ENCODE measurements at regions of chr14 and their contacts with region 1.

Region 1: DNA sequence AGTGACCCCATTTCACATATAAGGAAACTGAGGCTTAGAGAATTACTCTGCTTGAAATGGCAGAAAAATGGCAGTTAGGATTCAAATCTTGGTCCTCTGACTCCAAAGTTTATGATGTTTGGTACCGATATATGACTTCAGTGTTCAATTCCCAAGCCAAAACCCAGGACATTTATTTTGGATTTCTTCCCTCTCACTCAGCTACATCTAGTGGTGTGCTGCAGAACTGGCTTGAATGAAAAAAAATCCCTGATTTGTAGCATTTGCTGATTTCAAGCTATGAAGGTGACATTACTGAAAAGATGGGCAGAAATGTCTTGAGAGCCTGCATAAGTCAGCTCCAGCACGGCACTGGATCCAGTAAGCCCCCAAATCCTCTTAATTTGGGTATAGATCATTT is 106.4 kb downstream of the EFCAB11 start:
- DNase-seq: no peak
- H3K4me3 ChIP-seq: no peak overlapping the region
- H3K27ac ChIP-seq: no peak overlapping the region
- H3K4me1 ChIP-seq: peaks cover 0 to 13% (median 6%) of the 10 kb centered on the region in 4 donors
- H3K27me3 ChIP-seq: no peaks in the 10 kb centered on the region
- CTCF ChIP-seq: peak; percentile 25 to 46 (median 28)
- EP300 ChIP-seq: no peak
- POLR2A ChIP-seq: no peak

Region 2: DNA sequence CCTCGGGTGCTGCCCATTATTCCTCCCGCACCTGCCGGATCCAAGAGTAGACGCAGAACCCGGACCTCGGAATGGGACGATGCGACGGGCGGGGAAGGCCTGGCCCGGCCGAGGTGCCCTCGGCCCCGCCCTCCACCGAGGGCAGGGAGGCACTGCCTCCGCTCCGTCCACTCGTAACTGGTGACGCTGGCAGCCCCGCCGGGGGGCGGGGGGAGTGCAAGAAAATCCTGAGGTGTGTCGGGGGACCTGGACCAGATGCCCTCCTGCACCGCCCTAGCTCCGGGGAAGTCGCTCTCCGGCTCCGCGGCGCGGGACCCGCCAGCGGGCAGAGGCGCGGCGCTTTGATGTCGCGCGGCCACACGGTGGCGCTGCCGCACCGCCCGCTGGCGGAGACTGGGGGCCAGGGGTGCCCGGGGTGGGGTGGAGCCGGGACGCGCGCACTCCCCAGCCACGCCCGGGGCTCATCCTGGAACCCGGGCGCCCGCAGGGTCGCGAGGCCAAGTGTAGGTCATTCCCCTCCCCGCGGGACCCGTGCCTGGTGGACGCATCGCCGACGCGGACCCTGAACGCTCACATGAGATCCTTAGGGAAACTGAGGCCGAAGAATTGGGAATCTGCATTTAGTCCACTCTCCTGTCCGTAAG is 820.9 kb before region 1 on chr14:
- intact Hi-C with region 1: loop called (anchors 5 kb)
- DNase-seq: peak; percentile 72
- H3K4me3 ChIP-seq: peak overlapping the region; percentile 61 to 74 (median 62)
- H3K27ac ChIP-seq: no peak overlapping the region
- H3K4me1 ChIP-seq: peaks cover 12 to 16% (median 14%) of the 10 kb centered on the region in 4 donors
- H3K27me3 ChIP-seq: peaks cover 0 to 52% (median 0%) of the 10 kb centered on the region in 4 donors
- CTCF ChIP-seq: peak; percentile 79 to 99 (median 91)
- EP300 ChIP-seq: no peak
- POLR2A ChIP-seq: no peak

Measured in esophagus muscularis mucosa (tissue), 4 donors.